GM10248 (cell line): ENCODE measurements at regions of chr1 and their contacts with region 1.

Region 1: DNA sequence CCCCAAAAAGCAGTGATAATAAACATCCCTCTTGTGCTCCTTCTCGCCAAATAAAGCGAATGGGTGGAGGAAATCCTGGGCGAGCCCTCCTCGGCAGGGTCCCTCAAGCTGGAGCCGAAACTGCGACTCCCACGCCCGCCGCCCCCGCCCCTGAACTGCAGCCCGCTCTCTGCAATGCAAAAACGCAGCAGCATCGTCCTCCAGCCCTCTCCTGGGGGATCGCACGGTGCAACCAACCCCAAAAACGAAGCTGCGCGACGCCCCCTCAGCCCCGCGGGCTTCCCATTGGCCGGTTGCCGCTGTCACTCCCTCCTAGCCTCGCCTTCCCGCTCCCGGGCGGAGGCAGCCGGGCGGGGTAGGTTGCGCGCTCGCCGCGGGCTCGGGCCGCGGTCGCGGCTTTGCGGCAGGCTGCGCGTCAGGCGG is at the start of gene TMCC2:
- DNase-seq: peak; percentile 94
- CTCF ChIP-seq: no peak

Region 2: GRCh38 chr1:204975570-204976235 is 251.9 kb before region 1 on chr1:
- CTCF ChIA-PET with region 1: interaction called, 11 read pairs
- POLR2A ChIA-PET with region 1: no interaction called
- DNase-seq: peak; percentile 83
- CTCF ChIP-seq: peak; percentile 92

Region 3: DNA sequence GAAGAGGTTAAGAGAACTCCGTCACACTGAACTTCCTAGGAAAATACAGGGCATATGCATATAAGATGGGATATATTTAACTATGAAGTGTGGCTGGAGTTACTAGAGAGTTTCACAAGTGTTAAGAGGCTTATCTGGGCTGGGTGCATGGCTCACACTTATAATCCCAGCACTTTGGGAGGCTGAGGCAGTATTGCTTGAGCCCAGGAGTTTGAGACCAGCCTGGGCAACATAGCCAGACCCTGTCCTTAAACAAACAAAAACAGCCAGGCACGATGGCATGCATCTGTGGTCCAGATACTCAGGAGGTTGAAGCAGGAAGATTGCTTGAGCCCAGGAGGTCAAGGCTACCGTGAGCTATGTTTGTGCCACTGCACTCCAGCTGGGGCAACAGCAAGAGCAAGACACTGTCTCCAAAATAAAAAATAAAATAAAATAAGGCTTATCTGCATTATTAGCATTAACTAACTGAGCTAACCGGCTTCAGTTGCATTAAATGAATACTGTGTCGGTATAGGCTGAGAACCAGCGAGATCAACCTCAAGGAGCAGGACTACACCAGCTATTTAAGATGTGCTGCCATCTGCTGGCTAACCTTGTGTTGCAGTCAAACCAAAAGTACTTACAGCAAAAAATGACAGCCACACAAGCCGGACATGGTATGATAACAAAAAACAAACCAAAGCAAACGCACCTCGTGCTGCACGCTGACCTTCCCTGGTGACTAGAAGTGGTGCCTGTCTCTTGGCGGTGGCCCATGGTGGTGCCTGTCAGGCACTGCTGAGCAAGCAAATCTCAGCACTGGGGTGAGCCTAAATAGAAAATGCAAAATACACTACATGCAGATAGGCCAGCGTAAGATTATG is 86.1 kb before region 1 on chr1:
- CTCF ChIA-PET with region 1: no interaction called
- POLR2A ChIA-PET with region 1: no interaction called
- DNase-seq: peak; percentile 75
- CTCF ChIP-seq: peak; percentile 68

Region 4: GRCh38 chr1:205172729-205173366 is 54.7 kb before region 1 on chr1:
- CTCF ChIA-PET with region 1: no interaction called
- POLR2A ChIA-PET with region 1: no interaction called
- DNase-seq: no peak
- CTCF ChIP-seq: no peak

Region 5: DNA sequence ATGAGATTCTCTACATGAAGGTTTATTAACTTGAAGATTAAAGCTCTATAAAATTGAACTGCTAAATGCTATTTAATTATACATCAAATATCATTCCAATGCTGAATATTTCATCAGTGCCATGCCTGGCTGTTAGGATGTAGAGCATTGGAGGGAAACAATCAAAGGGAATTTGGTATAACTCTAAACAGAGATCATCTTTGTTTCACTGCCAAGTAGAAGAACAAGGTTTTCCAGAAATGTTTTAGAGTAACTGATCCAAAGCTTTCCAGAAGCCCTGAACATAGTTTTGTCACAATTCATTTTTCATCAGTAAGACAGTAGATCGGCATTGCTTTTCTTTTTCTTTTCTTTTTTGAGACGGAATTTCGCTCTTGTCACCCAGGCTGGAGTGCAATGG is 10.2 kb before region 1 on chr1:
- CTCF ChIA-PET with region 1: interaction called, 23 read pairs
- POLR2A ChIA-PET with region 1: no interaction called
- DNase-seq: no peak
- CTCF ChIP-seq: no peak